ENCODE measurements at regions of chr6 and their contacts with region 1.

Region 1: DNA sequence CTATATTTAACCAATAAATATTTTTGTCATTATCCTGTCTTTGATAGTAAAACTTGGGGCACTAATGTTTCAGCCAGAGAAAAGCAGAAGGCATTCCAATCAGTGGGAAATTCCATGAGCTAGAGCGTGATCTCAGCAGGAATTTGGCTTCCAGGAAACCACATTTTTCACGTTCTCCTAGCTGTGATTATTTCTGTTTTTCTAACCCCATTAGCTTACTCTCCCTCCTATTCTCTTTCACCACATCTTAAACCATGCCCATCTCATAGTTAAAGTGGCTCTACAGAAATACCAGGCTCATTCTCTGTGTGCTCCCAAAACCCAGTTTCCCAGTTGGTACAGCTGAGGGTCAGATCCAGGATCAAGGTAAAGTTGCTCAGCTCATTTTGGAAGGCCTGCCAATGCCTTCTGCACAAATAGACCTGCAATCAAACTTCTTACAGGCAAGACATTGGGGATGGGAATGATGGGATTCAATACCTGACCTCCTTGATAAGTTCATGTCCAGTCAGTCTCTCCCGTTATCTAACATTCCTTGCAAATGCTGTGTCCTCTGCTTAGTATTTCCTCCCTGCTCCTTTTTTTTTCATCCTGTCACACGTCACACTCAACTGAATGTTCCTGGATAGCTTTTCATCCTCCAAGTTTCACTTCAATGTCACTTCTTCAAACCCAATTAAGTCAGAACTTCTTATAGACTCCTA is 33.1 kb upstream of the TMEM30A start:
- DNase-seq: no peak
- H3K4me3 ChIP-seq: no peak overlapping the region
- H3K27ac ChIP-seq: peak overlapping the region; percentile 50 to 64
- H3K4me1 ChIP-seq: peaks cover 0 to 16% of the 10 kb centered on the region in 2 donors
- H3K27me3 ChIP-seq: no peaks in the 10 kb centered on the region
- CTCF ChIP-seq: no peak

Region 2: DNA sequence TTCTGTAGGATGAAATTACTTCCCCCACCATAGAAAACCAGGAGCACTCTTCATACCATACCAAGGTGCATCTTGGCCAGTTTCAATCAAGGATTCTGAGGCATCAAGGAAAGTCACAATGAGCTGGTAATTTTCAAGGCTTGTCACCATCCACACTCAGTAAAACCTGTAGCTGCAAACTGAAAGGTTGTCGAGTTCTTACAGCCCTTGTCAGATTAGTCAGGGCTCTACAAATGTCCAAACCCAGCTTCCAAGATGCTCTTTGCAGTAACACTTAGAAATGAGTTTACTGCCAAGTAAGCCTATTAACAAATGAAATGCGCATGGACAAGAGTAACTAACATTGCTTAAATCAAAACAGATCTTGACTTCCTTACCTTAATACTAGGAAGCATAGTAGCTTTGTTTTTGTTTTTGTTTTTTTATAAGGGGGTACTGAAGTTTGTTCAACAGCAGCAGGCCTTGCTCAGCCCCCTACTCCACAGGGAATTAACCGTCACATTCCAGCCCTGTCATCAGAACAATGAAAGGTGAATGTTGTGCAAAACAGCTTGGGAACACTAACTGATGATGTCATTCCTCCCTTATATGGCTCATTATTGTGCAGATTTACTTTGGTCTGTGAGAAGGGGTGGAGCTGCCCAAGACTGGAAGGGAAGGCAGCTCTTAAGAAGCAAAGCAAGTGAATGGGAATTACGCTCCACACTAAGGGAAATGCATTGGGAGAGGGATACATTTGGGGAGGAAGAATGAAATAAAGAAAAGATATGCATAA is 16.8 kb after region 1 on chr6:
- intact Hi-C with region 1: loop called (anchors 2 kb)
- DNase-seq: no peak
- H3K4me3 ChIP-seq: peak overlapping the region; percentile 6 to 16
- H3K27ac ChIP-seq: peak overlapping the region; percentile 50 to 68
- H3K4me1 ChIP-seq: peaks cover 0 to 17% of the 10 kb centered on the region in 2 donors
- H3K27me3 ChIP-seq: no peaks in the 10 kb centered on the region
- CTCF ChIP-seq: no peak